Naive thymus-derived CD4-positive, alpha-beta T cell (primary cell): ENCODE measurements at regions of chr4 and their contacts with region 1.

Region 1: GRCh38 chr4:179582164-179582905 is 2140.1 kb upstream of the AGA start:
- DNase-seq: no peak
- ATAC-seq: no peak
- H3K4me3 ChIP-seq: no peak overlapping the region
- H3K4me3 Mint-ChIP-seq: no peak overlapping the region
- H3K27ac ChIP-seq: no peak overlapping the region
- H3K27ac Mint-ChIP-seq: no peak overlapping the region
- H3K4me1 ChIP-seq: no peaks in the 10 kb centered on the region
- H3K4me1 Mint-ChIP-seq: no peaks in the 10 kb centered on the region
- H3K27me3 ChIP-seq: no peaks in the 10 kb centered on the region
- H3K27me3 Mint-ChIP-seq: no peaks in the 10 kb centered on the region

Region 2: GRCh38 chr4:179563741-179564140 is 18.6 kb before region 1 on chr4:
- CTCF ChIA-PET with region 1: no interaction called
- POLR2A ChIA-PET with region 1: no interaction called
- intact Hi-C with region 1: loop called in 1 of 2 experiments (anchors 1 kb)
- DNase-seq: no peak
- ATAC-seq: no peak
- H3K4me3 ChIP-seq: no peak overlapping the region
- H3K4me3 Mint-ChIP-seq: no peak overlapping the region
- H3K27ac ChIP-seq: no peak overlapping the region
- H3K27ac Mint-ChIP-seq: no peak overlapping the region
- H3K4me1 ChIP-seq: no peaks in the 10 kb centered on the region
- H3K4me1 Mint-ChIP-seq: no peaks in the 10 kb centered on the region
- H3K27me3 ChIP-seq: no peaks in the 10 kb centered on the region
- H3K27me3 Mint-ChIP-seq: no peaks in the 10 kb centered on the region